ENCODE measurements at regions of chr12 and their contacts with region 1.

Region 1: GRCh38 chr12:63843721-63844390 is 644 bp upstream of the SRGAP1 start:
- DNase-seq: peak; percentile 92 to 93
- ATAC-seq: peak; percentile 91 to 98 (median 94)
- H3K4me3 ChIP-seq: peak overlapping the region; percentile 68 to 98 (median 90)
- H3K27ac ChIP-seq: peak overlapping the region; percentile 80 to 95 (median 92)
- H3K4me1 ChIP-seq: peaks cover 0 to 44% (median 13%) of the 10 kb centered on the region in 9 donors
- H3K27me3 ChIP-seq: no peaks in the 10 kb centered on the region
- CTCF ChIP-seq: peak; percentile 87 to 98 (median 94)

Region 2: DNA sequence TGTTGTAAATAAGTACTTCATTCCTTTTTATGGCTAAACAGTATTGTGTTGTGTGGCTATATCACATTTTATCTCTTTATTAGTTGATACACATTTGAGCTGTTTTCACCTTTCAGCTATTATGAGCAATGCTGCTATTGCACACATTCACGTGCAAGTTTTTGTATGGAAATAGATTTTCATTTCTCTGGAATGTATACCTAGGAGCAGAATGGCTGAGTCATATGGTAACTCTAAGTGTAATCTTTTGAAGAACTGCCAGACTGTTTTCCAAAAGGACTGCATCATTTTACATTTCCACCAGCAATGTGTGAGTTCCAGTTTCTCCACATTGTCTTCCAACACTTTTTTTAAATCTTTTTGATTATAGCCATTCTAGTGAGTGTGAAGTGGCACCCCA is 134.7 kb after region 1 on chr12:
- intact Hi-C with region 1: loop called in 1 of 10 experiments (anchors 10 kb)
- DNase-seq: no peak
- ATAC-seq: no peak
- H3K4me3 ChIP-seq: no peak overlapping the region
- H3K27ac ChIP-seq: no peak overlapping the region
- H3K4me1 ChIP-seq: peaks cover 0 to 16% (median 0%) of the 10 kb centered on the region in 9 donors
- H3K27me3 ChIP-seq: no peaks in the 10 kb centered on the region
- CTCF ChIP-seq: no peak

Region 3: DNA sequence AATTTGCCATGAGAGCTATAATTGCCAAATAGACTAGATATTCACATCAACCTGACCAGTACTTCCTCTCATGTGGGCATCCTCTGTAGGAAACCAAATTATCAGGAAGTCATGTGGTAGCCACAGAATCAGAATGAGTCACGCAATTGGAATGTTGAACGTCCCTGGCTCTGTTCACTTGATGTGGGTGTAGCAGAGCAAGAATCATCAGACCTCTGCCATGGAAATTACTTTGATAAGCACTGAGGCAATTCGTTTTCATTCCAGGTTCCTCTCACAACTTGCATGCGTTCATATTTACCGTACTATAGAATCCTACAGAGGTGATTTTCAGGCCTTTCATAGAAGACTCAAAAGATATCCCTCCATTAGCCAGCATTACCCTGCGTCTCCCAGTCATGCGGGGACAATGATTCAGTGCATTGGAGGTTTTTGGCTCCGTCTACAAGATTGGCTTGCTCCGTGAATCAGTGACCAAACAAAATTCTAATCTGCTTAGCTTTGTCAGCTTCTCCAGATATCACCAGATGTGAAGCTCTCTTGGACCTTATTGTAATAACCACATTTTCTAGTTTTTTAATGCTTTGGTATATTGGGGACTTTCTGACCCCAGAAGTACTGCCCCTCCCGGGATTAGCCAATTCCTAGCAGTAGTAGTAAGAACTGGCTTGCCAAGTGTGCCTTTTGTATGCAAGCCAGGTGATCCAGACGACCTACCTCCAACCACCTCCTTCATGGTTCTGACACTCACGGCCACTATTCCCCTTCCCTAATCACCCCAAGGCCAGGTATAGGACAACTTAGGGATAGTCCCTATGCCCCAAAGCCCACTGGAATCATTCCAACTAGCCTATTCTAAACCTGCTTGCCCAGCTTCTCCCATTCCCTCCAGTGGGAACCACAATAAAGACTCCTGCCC is 244.8 kb after region 1 on chr12:
- intact Hi-C with region 1: loop called in 6 of 10 experiments (anchors 5 to 10 kb)
- DNase-seq: peak in 1 of 2 donors; percentile 82
- ATAC-seq: peak; percentile 92 to 97 (median 96)
- H3K4me3 ChIP-seq: peak overlapping the region in 5 of 10 donors; percentile 4 to 20 (median 16)
- H3K27ac ChIP-seq: peak overlapping the region; percentile 17 to 89 (median 80)
- H3K4me1 ChIP-seq: peaks cover 4 to 48% (median 26%) of the 10 kb centered on the region in 9 donors
- H3K27me3 ChIP-seq: no peaks in the 10 kb centered on the region
- CTCF ChIP-seq: no peak

Region 4: DNA sequence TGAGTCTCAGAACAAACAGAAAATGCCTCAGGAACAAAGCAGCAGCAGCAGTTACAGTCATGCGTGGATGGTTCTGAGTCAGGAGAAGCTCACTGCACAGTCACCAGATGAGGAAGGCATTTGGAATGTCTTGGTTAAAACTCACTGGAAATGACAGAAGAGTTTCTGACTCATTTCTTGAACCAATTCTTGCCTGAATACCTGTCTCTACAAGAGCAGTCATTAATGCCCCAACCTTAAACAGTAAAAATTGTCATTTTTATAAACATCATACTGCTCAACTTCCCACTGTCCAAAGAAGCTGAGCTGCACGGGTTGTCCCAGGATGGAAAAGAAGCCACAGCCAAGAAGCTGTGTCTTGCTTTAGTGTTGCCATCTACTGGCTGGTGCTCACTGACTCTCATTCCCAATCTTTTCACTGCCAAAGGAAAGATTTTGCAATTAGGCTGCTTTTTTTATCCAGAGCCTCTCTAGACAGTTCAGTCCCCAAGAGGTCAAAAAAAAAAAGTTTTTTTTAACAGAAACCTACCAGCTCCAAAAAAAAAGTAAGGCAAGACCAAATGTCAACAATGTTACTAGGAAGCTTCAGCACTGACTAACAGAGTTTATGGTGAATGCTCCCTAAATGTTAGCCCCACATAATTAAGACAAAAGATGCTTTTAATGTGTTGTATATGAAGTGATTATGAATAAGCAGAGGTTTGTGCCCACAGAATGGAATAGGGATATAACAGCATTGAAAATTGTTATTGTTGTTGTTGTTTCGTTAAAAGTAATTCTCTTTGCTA is 337.8 kb after region 1 on chr12:
- intact Hi-C with region 1: loop called (anchors 1 to 5 kb)
- DNase-seq: peak in 1 of 2 donors; percentile 58
- ATAC-seq: peak; percentile 84 to 94 (median 87)
- H3K4me3 ChIP-seq: peak overlapping the region in 1 of 10 donors; percentile 6
- H3K27ac ChIP-seq: peak overlapping the region in 6 of 10 donors; percentile 15 to 78 (median 43)
- H3K4me1 ChIP-seq: peaks cover 0 to 36% (median 12%) of the 10 kb centered on the region in 9 donors
- H3K27me3 ChIP-seq: no peaks in the 10 kb centered on the region
- CTCF ChIP-seq: peak in 8 of 9 donors; percentile 49 to 84 (median 70)

Region 5: DNA sequence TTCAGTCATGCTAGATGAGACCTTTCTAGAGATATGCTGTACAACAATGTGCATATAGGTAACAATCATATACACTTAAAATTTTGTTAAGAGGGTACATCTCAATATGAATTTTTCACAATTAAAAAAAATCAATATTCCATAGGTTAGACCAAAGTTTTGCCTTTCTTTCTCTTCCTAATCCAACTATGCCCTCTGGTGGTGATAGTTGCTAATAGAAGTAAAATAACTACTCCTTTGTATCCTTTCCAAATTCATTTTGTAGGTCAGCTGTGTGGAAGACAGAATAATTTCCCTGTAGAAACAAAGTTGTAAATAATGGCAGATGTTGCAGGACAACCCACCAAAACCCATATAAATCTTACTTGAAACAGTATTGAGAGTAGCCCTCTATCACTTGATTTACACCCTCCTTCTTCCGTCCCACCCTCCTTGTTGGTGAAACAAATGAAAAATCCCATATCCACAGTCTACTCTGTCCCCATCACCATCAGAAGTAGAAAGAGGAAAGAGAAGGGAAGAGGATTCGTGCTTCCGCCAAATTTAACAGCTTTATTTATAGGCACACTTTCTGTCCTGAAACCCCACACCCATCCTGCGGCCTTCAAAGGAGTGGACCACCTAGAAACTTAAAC is 412.4 kb after region 1 on chr12:
- intact Hi-C with region 1: loop called in 9 of 10 experiments (anchors 1 to 5 kb)
- DNase-seq: peak in 1 of 2 donors; percentile 29
- ATAC-seq: peak in 4 of 8 donors; percentile 25 to 52 (median 36)
- H3K4me3 ChIP-seq: peak overlapping the region in 3 of 10 donors; percentile 0 to 15 (median 11)
- H3K27ac ChIP-seq: no peak overlapping the region
- H3K4me1 ChIP-seq: peaks cover 0 to 12% (median 0%) of the 10 kb centered on the region in 9 donors
- H3K27me3 ChIP-seq: no peaks in the 10 kb centered on the region
- CTCF ChIP-seq: peak; percentile 54 to 83 (median 78)